Left cardiac atrium (tissue), 4 donors: ENCODE measurements at regions of chrX and their contacts with region 1.

Region 1: DNA sequence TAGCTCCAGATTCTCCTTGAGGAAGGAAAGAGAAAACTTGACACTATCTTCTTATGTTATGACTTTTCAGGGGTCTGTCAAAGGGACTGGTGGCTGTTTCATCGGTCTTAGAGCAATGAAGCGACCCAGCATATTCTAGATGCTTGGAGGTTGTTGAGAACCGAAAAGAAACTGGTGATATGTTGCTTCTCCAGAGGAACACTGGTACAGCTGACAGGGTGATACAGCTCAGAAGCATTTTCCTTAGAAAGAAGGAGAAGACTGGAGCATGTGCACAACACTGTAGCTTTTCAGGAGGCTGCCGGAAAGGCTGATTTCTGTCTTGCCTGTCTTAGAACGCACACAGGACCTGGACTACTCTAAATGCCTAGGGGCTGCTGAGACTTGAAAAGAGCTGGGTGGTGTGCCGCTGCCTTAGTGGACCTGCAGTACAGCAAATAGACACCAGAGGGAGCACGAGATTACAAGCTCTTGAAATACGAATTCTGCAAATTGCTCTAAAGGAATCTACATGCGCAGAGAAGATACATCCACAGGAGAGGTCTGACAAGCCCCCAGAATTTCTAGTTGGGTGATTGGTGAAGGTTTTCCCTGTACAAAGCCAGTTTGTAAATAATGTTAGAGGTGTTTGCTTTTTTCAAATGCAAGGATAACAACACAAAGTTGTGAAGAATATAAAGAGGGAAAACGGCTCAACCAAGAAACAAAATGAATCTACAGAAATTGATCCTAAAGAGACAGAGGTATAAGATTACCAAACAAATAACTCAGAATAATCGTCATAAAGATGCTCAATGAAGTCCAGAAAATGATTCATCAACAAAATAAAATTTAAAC is 223.1 kb upstream of the DMD start:
- DNase-seq: peak; percentile 42
- ATAC-seq: peak in 1 of 2 donors; percentile 23

Region 2: GRCh38 chrX:34299451-34299967 is 865.0 kb after region 1 on chrX:
- intact Hi-C with region 1: loop called in 1 of 2 experiments (anchors 10 kb)
- DNase-seq: no peak
- ATAC-seq: no peak